ENCODE measurements at regions of chrX and their contacts with region 1.

Region 1: DNA sequence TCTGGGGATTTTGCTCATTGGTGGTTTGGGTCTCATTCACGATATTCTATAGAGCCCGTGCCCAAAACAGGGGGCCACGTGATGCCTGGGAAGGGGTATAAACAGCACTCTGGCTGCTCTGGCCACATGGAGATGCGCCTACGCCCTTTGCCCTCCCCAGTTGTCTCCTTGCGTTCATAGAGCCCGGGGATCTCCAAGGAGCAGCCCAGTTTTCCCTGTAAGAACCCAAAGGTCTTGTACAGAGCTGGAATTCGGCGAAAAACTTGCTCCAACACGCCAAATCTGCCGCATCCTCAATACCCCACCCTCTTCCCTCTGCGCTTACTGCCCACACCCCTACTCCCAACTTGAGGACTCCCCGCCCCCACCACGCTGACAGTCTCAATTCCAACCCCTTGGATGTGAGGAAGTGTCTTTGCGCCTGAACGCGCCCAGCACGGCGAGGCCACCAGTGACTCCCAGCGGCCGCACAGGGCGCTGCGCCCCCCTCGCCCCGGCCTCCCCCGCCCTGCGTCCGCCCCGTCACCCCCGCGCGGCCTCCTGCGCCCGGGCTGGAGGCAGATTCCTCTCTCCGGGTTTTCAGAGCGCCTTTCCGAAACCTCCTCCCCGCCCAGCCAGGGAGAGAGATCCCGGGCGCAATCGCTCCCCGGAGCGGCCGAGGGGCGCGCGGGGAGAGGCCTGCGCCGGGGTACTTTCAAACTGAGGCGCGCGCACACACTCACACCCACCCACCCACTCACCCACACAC is at the start of gene NHS:
- DNase-seq: peak; percentile 89
- H3K4me3 ChIP-seq: peak within 1 kb of the TSS; percentile 52 to 69 (median 68)
- H3K27ac ChIP-seq: peak within 1 kb of the TSS; percentile 77 to 84 (median 81)
- H3K4me1 ChIP-seq: peaks cover 0 to 10% (median 0%) of the 10 kb centered on the region in 4 donors
- H3K27me3 ChIP-seq: peaks cover 0 to 5% (median 0%) of the 10 kb centered on the region in 3 donors
- CTCF ChIP-seq: peak in 2 of 4 experiments; percentile 17 to 62
- EP300 ChIP-seq: no peak
- POLR2A ChIP-seq: peak in 1 of 2 donors; percentile 29
- total RNA-seq, gene NHS: 9.3 to 22.7 (median 10.2) TPM

Region 2: GRCh38 chrX:17120816-17121215 is 254.0 kb before region 1 on chrX:
- intact Hi-C with region 1: loop called (anchors 10 kb)
- DNase-seq: no peak
- H3K4me3 ChIP-seq: no peak overlapping the region
- H3K27ac ChIP-seq: no peak overlapping the region
- H3K4me1 ChIP-seq: no peaks in the 10 kb centered on the region
- H3K27me3 ChIP-seq: no peaks in the 10 kb centered on the region
- CTCF ChIP-seq: no peak
- EP300 ChIP-seq: no peak
- POLR2A ChIP-seq: no peak

Region 3: GRCh38 chrX:17292132-17292527 is 82.7 kb before region 1 on chrX:
- intact Hi-C with region 1: loop called (anchors 5 kb)
- DNase-seq: peak; percentile 68
- H3K4me3 ChIP-seq: no peak overlapping the region
- H3K27ac ChIP-seq: peak overlapping the region; percentile 57 to 81 (median 78)
- H3K4me1 ChIP-seq: peaks cover 0 to 30% (median 9%) of the 10 kb centered on the region in 4 donors
- H3K27me3 ChIP-seq: no peaks in the 10 kb centered on the region
- CTCF ChIP-seq: no peak
- EP300 ChIP-seq: peak in 1 of 4 donors; percentile 45
- POLR2A ChIP-seq: no peak

Region 4: DNA sequence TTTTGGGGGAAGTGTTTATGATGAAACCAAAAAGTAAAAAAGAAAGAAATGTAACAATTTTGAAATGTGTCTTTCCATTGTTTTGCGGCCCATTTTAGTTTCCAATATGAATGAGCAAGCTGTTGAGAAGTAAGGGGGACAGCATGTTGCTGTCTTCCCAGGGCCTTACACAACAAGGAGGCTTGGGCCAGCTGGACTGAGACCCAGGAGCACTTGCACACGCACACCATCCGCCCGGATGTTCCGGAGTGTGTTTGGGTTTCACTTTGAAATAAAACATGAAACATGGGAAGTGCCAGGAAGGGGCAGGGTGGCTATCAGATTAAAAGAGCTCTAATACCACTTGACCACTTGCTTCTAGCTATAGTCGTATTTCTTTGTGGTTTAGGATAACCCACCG is 144.6 kb after region 1 on chrX:
- intact Hi-C with region 1: loop called (anchors 5 kb)
- DNase-seq: peak; percentile 92
- H3K4me3 ChIP-seq: no peak overlapping the region
- H3K27ac ChIP-seq: peak overlapping the region; percentile 32 to 69 (median 58)
- H3K4me1 ChIP-seq: peaks cover 0 to 35% (median 7%) of the 10 kb centered on the region in 4 donors
- H3K27me3 ChIP-seq: no peaks in the 10 kb centered on the region
- CTCF ChIP-seq: no peak
- EP300 ChIP-seq: peak in 2 of 4 donors; percentile 7 to 9
- POLR2A ChIP-seq: no peak

Region 5: GRCh38 chrX:17597836-17598442 is 223.1 kb after region 1 on chrX:
- intact Hi-C with region 1: loop called (anchors 2 kb)
- DNase-seq: peak; percentile 90
- H3K4me3 ChIP-seq: no peak overlapping the region
- H3K27ac ChIP-seq: peak overlapping the region; percentile 49 to 68 (median 62)
- H3K4me1 ChIP-seq: peaks cover 0 to 45% (median 24%) of the 10 kb centered on the region in 4 donors
- H3K27me3 ChIP-seq: no peaks in the 10 kb centered on the region
- CTCF ChIP-seq: no peak
- EP300 ChIP-seq: no peak
- POLR2A ChIP-seq: no peak

Region 6: DNA sequence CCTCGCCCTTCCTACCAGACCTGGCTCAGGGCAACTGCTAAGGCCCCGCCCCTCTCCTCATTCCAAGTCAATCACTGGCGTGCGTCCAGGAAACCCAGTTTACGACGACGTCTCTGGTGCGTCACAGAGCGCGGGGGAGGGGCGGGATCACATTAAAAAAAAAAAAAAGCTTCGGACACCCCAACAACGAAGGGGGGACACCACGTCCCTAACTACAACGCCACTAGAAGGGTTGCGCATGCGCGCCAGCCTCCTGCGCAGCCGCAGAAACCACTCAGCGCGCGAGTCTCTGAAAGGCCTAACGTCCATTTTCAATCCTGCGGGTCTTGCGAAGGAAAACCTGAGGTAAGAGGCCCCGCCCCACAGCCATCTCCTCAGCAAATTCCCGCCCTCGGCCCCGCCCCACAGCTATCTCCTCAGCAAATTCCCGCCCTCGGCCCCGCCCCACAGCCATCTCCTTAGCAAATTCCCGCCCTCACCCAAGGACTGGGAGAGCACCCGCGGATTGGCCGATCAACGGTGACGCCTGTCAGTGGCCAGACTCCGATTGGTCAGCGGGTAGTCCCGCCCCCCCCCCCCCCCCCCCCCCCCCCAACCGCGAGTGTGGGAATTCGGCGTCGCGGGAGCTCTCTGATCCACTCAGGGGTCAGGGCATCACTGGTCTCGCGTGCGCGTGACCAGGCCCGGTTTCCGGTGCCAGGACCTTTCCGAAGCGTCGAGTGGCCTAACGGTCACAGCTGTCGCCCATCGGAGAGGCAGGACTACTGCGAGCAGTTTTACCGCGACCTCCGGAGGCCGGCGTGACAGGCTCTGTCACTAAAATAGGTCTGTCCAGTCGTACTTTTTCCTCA is 362.3 kb after region 1 on chrX and contains the start of gene SCML1:
- intact Hi-C with region 1: loop called (anchors 5 kb)
- DNase-seq: peak; percentile 99
- H3K4me3 ChIP-seq: peak within 1 kb of the TSS; percentile 51 to 61 (median 60)
- H3K27ac ChIP-seq: peak within 1 kb of the TSS; percentile 88 to 96 (median 92)
- H3K4me1 ChIP-seq: peaks cover 0 to 18% (median 0%) of the 10 kb centered on the region in 4 donors
- H3K27me3 ChIP-seq: no peaks in the 10 kb centered on the region
- CTCF ChIP-seq: no peak
- EP300 ChIP-seq: peak in 1 of 4 donors; percentile 65
- POLR2A ChIP-seq: peak; percentile 69 to 70
- total RNA-seq, gene SCML1: 10.7 to 15.3 (median 13.2) TPM